MCF 10A (cell line): ENCODE measurements at regions of chrX and their contacts with region 1.

Region 1: DNA sequence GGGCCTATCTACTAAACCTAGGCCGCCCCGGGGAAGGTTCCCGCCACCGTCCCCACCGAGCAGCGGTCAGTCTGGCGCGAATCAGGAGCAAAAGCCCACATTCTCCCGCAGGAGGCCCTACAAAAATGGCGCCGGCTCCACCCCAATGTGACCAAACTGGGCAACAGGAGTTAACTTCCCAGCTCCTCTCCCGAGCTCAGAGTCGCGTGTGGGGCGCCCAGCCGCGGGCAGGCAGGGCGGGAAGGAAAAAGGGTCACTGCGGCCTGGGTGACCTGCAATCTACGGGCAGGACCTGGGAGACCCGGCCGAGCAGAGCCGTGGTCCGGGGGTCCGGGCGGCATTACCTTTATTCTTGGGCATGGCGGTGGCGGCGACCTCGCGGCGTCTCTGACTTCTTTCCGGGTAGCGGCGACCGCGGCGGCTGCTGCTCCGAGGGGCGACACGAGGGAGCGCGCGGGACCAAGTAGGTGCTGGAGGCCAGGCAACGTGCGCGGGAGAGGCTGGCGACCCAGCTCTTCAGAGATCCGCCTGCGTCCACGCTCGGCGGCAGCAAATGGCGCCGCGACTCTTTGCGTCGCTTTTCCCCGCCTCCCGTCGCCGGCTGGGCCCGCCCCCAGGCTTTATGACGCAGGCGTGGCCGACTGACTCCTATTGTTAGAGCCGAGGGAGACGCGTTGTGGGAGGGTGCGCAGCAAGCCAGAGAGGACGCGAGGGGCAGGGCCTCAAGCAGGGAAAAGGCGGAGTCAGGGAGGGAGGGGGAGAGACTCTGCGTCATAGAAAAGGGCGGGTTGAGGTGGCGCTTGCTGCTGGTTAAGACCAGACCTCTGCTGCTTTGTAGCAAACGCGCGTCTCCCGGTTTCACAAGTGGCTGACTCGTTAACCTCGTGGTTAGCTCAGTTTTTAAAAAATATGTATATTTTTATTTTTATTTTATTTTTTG is at the start of gene EIF1AX:
- DNase-seq: peak; percentile 100
- H3K4me3 Mint-ChIP-seq: peak within 1 kb of the TSS; percentile 87
- H3K27ac Mint-ChIP-seq: peak within 1 kb of the TSS; percentile 87
- H3K4me1 Mint-ChIP-seq: peaks cover 11% of the 10 kb centered on the region
- H3K27me3 Mint-ChIP-seq: no peaks in the 10 kb centered on the region
- CTCF ChIP-seq: no peak
- total RNA-seq, gene EIF1AX: 183 and 209 TPM in 2 replicates

Region 2: GRCh38 chrX:20015945-20016615 is 125.5 kb before region 1 on chrX:
- CTCF ChIA-PET with region 1: no interaction called
- POLR2A ChIA-PET with region 1: no interaction called
- intact Hi-C with region 1: no loop called
- DNase-seq: no peak
- H3K4me3 Mint-ChIP-seq: no peak overlapping the region
- H3K27ac Mint-ChIP-seq: no peak overlapping the region
- H3K4me1 Mint-ChIP-seq: no peaks in the 10 kb centered on the region
- H3K27me3 Mint-ChIP-seq: peaks cover 47% of the 10 kb centered on the region
- CTCF ChIP-seq: no peak

Region 3: GRCh38 chrX:20128670-20129069 is 12.9 kb before region 1 on chrX:
- CTCF ChIA-PET with region 1: interaction called, 8 read pairs
- POLR2A ChIA-PET with region 1: interaction called, 47 read pairs
- intact Hi-C with region 1: no loop called
- DNase-seq: peak; percentile 39
- H3K4me3 Mint-ChIP-seq: no peak overlapping the region
- H3K27ac Mint-ChIP-seq: no peak overlapping the region
- H3K4me1 Mint-ChIP-seq: peaks cover 14% of the 10 kb centered on the region
- H3K27me3 Mint-ChIP-seq: no peaks in the 10 kb centered on the region
- CTCF ChIP-seq: no peak